Mammary epithelial cell (primary cell): ENCODE measurements at regions of chr20 and their contacts with region 1.

Region 1: GRCh38 chr20:63056236-63056948 is 49.6 kb upstream of the BHLHE23 start:
- DNase-seq: no peak
- H3K4me3 ChIP-seq: no peak overlapping the region
- H3K27ac ChIP-seq: no peak overlapping the region
- H3K4me1 ChIP-seq: no peaks in the 10 kb centered on the region
- H3K27me3 ChIP-seq: peaks cover 4% of the 10 kb centered on the region
- CTCF ChIP-seq: peak; percentile 36 to 68

Region 2: DNA sequence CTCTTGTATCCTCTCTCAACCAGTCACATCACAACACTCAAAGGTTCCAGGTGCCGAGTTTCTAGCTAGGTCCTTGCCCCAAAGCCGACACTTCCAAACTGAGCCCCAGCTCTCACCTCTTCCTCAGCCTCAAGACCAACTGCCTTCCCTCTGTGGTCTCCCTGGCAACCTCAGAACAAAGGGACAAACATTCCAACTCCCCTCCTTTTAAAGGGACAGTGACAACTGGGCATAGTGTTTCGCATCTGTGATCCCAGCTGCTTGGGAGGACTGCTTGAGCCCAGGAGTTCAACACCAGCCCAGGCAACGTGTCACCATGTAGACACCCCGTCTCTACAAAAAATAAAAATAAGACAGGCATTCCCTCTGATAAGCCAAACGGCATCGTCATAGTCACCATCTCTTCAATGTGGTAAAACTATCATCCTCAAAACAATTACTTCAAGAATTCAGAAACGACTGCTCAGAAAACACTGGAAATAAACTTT is 141.4 kb before region 1 on chr20:
- CTCF ChIA-PET with region 1: no interaction called
- dilution Hi-C with region 1: no loop called
- in situ Hi-C with region 1: no loop called
- intact Hi-C with region 1: no loop called
- DNase-seq: peak; percentile 46
- H3K4me3 ChIP-seq: no peak overlapping the region
- H3K27ac ChIP-seq: peak overlapping the region; percentile 50
- H3K4me1 ChIP-seq: peaks cover 27% of the 10 kb centered on the region
- H3K27me3 ChIP-seq: no peaks in the 10 kb centered on the region
- CTCF ChIP-seq: no peak

Region 3: DNA sequence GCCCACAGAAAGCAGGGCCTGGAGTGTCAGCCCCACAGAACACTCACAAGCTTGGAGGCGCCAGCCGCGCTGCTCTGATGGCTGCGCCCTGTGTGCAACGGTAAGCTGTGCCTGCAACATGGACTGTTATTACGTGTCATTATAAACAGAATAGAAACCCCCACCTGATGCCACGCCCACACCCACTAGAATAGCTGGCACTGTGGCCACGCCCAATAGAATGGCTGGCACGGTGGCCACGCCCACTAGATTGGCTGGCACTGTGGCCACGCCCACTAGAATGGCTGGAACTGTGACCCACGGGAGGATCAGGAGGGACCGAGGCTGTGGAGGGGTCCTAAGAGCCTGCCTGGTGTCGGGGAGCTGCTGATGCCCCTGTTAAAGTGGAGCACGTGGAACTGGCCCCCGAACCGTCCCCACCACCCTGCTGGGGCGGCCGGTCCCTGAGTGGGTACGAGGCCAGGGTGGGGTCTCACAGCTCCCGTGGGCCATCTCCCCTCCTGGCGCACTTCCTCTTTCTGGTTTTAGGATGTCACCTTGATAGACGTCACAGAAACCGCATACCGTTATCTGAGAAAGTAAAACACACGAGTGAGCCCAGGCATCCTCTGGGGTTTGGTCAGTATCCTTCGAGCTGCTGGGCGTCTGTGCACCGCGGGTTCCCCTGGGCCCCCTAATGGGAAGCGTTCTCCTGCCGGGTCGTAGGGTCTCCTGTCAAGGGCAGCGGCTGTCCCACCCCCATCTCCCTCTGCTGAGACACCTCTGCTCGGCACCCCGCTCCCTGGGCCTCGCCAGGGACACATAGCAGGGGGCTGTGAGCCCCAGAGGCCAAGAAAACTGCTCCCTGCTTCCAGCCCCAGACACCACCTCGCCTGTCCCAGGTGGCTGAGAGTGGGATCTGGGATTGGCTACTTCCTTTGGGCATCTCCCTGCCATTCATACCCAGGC is 78.5 kb before region 1 on chr20:
- CTCF ChIA-PET with region 1: no interaction called
- dilution Hi-C with region 1: loop called (anchors 5 kb)
- in situ Hi-C with region 1: no loop called
- intact Hi-C with region 1: no loop called
- DNase-seq: no peak
- H3K4me3 ChIP-seq: no peak overlapping the region
- H3K27ac ChIP-seq: no peak overlapping the region
- H3K4me1 ChIP-seq: peaks cover under 1% of the 10 kb centered on the region
- H3K27me3 ChIP-seq: peaks cover 19% of the 10 kb centered on the region
- CTCF ChIP-seq: no peak

Region 4: GRCh38 chr20:63178889-63179686 is 122.7 kb after region 1 on chr20:
- CTCF ChIA-PET with region 1: no interaction called
- dilution Hi-C with region 1: no loop called
- in situ Hi-C with region 1: loop called in 1 of 2 experiments (anchors 10 kb)
- intact Hi-C with region 1: loop called (anchors 1 kb)
- DNase-seq: no peak
- H3K4me3 ChIP-seq: no peak overlapping the region
- H3K27ac ChIP-seq: no peak overlapping the region
- H3K4me1 ChIP-seq: peaks cover 7% of the 10 kb centered on the region
- H3K27me3 ChIP-seq: peaks cover 46% of the 10 kb centered on the region
- CTCF ChIP-seq: peak in 1 of 2 donors; percentile 63

Region 5: DNA sequence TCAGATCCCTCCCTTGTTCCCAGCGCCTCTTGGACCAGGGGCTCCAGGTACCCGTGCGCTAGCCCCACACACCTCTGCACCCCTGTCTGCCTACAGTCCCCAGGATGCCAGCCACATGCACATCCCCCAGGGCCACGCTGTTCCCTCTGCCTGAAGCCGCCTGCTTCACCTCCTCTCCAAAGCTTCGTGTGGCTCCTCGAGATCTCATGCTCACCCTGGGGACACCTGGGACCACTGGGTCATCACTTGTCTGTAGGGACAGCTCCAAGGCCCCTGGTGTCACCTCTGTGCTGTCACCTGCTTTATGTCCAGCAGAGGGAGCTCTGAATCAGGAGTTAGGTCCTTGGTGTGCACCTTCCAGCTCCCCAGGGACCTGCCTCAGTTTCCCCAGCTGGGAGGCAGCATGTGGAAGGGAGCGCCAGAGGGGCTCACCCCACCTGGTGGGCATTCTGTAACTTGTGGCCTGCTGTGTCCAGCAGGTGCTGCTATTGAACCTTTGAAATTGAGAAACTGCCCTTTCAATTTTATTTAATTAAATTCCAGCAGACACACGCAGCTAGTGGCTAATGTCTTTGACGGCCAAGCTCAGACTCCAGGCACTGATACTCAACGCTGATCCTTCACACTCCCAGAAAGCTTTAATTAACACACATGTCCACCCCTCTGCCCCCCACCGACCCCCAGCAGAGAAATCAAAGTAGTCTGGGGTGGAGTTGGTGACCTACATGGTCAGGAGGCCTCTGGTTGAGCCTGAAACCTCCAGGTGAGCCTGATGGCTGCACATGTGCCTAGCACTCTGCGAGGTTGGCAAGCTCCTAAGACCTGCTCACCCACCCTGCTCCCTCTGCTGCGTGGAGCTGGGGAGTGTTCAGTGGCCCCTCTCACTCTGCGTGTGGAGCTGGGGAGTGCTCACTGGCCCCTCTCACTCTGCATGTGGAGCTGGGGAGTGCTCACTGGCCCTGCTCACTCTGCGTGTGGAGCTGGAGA is 167.1 kb after region 1 on chr20:
- CTCF ChIA-PET with region 1: no interaction called
- dilution Hi-C with region 1: loop called (anchors 5 kb)
- in situ Hi-C with region 1: no loop called
- intact Hi-C with region 1: no loop called
- DNase-seq: no peak
- H3K4me3 ChIP-seq: no peak overlapping the region
- H3K27ac ChIP-seq: no peak overlapping the region
- H3K4me1 ChIP-seq: peaks cover 8% of the 10 kb centered on the region
- H3K27me3 ChIP-seq: peaks cover 2% of the 10 kb centered on the region
- CTCF ChIP-seq: peak; percentile 66 to 90

Region 6: GRCh38 chr20:63381807-63382322 is 325.5 kb after region 1 on chr20:
- CTCF ChIA-PET with region 1: no interaction called
- dilution Hi-C with region 1: no loop called
- in situ Hi-C with region 1: no loop called
- intact Hi-C with region 1: loop called (anchors 5 kb)
- DNase-seq: no peak
- H3K4me3 ChIP-seq: no peak overlapping the region
- H3K27ac ChIP-seq: no peak overlapping the region
- H3K4me1 ChIP-seq: no peaks in the 10 kb centered on the region
- H3K27me3 ChIP-seq: peaks cover 5% of the 10 kb centered on the region
- CTCF ChIP-seq: peak; percentile 85 to 91

Region 7: DNA sequence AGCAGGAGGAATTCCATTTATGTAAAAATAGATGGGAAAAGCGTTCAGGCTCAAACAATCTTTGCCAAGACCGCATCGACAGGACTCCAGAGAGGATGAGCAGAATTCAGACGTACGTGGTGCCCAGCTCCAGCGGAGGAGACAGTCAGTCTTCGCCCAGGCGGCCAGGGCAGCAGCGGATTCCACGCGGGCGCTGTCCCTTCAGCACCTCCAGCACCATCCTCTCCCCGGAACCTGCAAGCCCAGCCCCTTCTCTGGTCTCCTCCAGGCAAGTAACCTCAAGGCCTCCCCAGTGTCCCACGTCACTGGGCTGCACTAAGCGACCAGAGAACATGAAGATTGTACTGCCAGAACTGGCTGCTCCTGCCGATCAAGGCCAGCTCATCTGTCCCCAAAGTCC is 418.8 kb after region 1 on chr20:
- CTCF ChIA-PET with region 1: no interaction called
- dilution Hi-C with region 1: loop called (anchors 5 kb)
- in situ Hi-C with region 1: no loop called
- intact Hi-C with region 1: no loop called
- DNase-seq: peak; percentile 34
- H3K4me3 ChIP-seq: no peak overlapping the region
- H3K27ac ChIP-seq: no peak overlapping the region
- H3K4me1 ChIP-seq: no peaks in the 10 kb centered on the region
- H3K27me3 ChIP-seq: peaks cover 33% of the 10 kb centered on the region
- CTCF ChIP-seq: no peak